GM10248 (cell line): ENCODE measurements at regions of chr3 and their contacts with region 1.

Region 1: GRCh38 chr3:66253790-66254620 is 33.2 kb downstream of the SLC25A26 start:
- DNase-seq: peak; percentile 37
- CTCF ChIP-seq: peak; percentile 51

Region 2: DNA sequence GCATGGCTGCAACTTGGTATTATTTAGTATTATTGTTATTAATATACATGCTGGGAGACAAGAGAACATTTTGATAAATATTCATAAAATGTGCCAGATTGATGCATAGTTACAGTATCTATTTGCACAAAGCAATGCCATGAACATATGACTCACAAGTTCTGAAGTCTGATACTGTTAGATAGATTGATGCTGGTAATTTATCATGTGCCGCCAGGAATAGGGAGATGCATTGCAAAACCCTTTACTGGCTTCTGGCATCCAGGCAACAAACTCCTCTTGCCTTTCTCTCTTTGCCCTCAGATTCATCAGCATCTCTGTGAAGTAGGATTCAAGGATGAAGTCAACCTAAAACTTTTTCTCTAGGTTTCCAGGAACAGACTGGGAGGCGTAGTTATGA is 74.2 kb before region 1 on chr3:
- CTCF ChIA-PET with region 1: no interaction called
- POLR2A ChIA-PET with region 1: no interaction called
- DNase-seq: no peak
- CTCF ChIP-seq: no peak

Region 3: DNA sequence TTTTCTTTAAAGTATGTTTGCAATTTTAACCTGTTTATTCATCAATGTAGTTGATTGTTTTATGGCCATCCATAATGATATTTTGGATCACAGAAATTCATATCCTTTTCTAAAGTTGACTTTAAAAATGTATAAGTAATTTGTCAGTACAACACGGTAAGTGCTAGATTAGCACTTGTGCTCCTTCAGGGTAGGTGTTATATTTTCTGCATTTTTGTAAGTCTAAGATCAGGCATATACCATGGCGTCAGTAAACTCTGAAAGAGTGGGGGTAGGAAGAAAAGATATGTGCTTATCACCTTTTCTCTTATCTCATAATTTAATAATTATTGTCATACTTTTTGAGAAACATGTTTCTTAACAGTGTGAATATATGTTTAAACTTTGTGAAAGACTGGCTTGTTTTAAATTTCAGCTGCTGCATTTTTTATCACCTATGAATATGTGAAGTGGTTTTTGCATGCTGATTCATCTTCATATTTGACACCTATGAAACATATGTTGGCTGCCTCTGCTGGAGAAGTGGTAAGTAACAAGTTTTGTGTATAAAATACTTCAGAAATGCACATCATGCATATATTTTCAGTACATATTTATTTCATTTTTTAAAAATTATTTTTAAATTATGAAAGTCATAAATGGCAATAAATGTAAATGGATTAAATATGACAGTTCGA is 11.1 kb before region 1 on chr3:
- CTCF ChIA-PET with region 1: interaction called, 35 read pairs
- POLR2A ChIA-PET with region 1: no interaction called
- DNase-seq: no peak
- CTCF ChIP-seq: no peak

Region 4: GRCh38 chr3:66372681-66373350 is 118.8 kb after region 1 on chr3:
- CTCF ChIA-PET with region 1: interaction called, 10 read pairs
- POLR2A ChIA-PET with region 1: no interaction called
- DNase-seq: no peak
- CTCF ChIP-seq: peak; percentile 27

Region 5: DNA sequence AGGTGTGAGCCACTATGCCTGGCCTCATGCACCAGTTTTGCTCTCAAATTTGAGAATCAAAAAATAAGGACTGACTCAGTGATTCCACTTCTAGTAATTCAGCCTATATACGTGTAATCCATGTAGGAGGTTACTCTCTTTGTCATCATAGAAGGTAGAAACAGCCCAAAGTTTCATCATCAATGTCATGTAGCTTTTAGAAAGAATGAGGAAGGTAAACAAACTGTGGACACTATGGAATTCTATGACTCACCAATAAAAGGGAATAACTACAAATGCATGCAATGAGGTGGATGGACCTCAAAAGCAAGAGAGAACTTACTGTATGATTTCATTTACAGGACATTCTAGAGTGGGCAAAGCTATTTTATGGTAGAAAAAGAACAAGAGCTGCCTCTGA is 340.0 kb after region 1 on chr3:
- CTCF ChIA-PET with region 1: no interaction called
- POLR2A ChIA-PET with region 1: no interaction called
- DNase-seq: no peak
- CTCF ChIP-seq: no peak

Region 6: GRCh38 chr3:66816090-66816761 is 562.2 kb after region 1 on chr3:
- CTCF ChIA-PET with region 1: interaction called, 130 read pairs
- POLR2A ChIA-PET with region 1: no interaction called
- DNase-seq: peak; percentile 44
- CTCF ChIP-seq: peak; percentile 8

Region 7: DNA sequence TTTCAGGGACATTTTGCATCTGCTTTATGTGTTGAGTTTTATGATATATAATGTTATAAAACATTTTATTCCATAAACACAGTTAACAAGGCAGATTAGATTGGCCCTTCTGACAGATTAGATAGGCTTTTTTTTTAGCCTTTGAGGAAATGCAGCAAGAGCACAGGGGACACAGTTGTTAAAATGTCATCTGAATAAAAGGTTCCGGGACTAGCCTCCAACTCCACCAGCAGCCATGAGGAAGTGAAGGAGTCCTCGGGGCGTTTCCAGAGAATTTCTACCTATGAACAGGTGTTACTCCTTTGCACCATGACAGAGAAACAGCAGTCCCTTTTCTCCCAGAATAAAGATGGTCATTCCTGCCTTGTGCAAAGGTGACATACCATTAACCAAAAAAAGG is 576.3 kb after region 1 on chr3:
- CTCF ChIA-PET with region 1: interaction called, 130 read pairs
- POLR2A ChIA-PET with region 1: no interaction called
- DNase-seq: no peak
- CTCF ChIP-seq: no peak